A673 (cell line): ENCODE measurements at regions of chr7 and their contacts with region 1.

Region 1: DNA sequence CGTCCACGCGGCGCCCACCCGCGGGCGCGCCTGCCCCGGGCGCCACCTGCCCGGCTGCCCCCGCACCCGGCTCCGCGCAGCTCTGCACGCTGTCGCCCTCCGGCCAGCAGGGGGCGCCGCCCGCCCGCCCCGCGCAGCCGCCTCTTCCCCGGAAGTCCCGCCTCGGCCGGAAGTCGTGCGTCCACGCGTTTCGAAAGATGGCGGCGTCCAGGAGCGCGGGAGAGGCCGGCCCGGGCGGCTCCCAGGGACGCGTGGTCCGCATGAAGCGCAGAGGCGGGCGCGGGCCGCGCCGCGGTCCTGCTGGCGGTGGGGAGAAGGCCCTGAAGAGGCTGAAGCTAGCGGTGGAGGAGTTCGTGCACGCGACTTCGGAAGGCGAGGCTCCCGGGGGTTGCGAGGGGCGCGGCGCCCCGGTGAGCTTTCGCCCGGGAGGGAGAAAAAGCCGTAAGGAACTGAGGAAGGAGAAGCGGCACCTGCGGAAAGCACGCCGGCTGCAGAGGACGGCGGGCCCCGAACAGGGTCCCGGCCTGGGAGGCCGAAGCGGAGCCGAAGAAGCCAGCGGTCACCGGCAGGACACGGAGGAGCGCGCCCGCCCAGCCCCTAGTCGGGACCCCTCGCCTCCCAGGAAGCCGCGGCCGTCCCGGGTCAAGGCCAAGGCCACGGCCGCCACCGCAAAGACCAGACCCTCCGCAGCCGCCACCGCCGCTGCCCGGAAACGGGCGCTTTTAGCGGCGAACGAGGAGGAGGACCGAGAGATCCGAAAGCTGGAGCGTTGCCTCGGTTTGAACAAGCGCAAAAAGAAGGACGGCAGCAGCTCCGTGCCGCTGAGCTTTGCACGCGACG is at the start of gene NOM1:
- DNase-seq: peak; percentile 93
- H3K4me3 ChIP-seq: peak within 1 kb of the TSS; percentile 99
- H3K27ac ChIP-seq: peak within 1 kb of the TSS; percentile 90
- H3K4me1 ChIP-seq: peaks cover 7% of the 10 kb centered on the region
- H3K27me3 ChIP-seq: no peaks in the 10 kb centered on the region
- CTCF ChIP-seq: peak; percentile 57
- total RNA-seq, gene NOM1: 34.1 and 34.8 TPM in 2 replicates

Region 2: GRCh38 chr7:156616269-156617202 is 333.2 kb before region 1 on chr7:
- CTCF ChIA-PET with region 1: no interaction called
- POLR2A ChIA-PET with region 1: no interaction called
- intact Hi-C with region 1: no loop called
- DNase-seq: no peak
- H3K4me3 ChIP-seq: no peak overlapping the region
- H3K27ac ChIP-seq: no peak overlapping the region
- H3K4me1 ChIP-seq: no peaks in the 10 kb centered on the region
- H3K27me3 ChIP-seq: peaks cover 44% of the 10 kb centered on the region
- CTCF ChIP-seq: no peak

Region 3: GRCh38 chr7:157080111-157080730 is 130.5 kb after region 1 on chr7:
- CTCF ChIA-PET with region 1: no interaction called
- POLR2A ChIA-PET with region 1: no interaction called
- intact Hi-C with region 1: no loop called
- DNase-seq: no peak
- H3K4me3 ChIP-seq: no peak overlapping the region
- H3K27ac ChIP-seq: no peak overlapping the region
- H3K4me1 ChIP-seq: no peaks in the 10 kb centered on the region
- H3K27me3 ChIP-seq: peaks cover 48% of the 10 kb centered on the region
- CTCF ChIP-seq: no peak

Region 4: GRCh38 chr7:157336383-157337315 is 386.9 kb after region 1 on chr7 and contains the start of gene DNAJB6:
- CTCF ChIA-PET with region 1: no interaction called
- POLR2A ChIA-PET with region 1: interaction called, 20 read pairs
- intact Hi-C with region 1: no loop called
- DNase-seq: peak; percentile 95
- H3K4me3 ChIP-seq: peak within 1 kb of the TSS; percentile 63
- H3K27ac ChIP-seq: peak within 1 kb of the TSS; percentile 90
- H3K4me1 ChIP-seq: peaks cover 7% of the 10 kb centered on the region
- H3K27me3 ChIP-seq: no peaks in the 10 kb centered on the region
- CTCF ChIP-seq: no peak
- total RNA-seq, gene DNAJB6: 133 and 146 TPM in 2 replicates